ENCODE measurements at regions of chr17 and their contacts with region 1.

Region 1: DNA sequence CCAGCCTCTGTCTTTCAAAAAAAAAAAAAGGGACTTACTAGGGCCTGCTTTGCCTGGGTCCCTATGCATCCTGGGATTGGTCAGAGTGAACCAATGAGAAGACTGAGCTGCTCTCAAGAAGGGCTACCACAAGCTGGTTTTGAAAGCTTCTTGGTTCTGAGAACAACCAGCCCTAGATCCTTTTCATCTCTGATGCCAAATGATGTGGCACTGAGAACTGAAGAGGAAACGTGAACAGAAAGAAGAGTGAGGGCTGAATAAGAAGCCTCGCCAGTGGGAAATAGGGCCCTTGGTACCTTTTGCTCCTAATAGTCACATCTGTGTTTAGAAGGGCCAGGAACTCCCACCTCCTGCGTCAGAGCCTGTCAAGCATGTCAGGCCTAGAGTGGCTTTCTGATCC is 10.7 kb downstream of the TACO1 start:
- DNase-seq: no peak
- H3K4me3 ChIP-seq: no peak overlapping the region
- H3K4me3 Mint-ChIP-seq: peak overlapping the region in 5 of 7 donors; percentile 15 to 71 (median 54)
- H3K27ac ChIP-seq: no peak overlapping the region
- H3K27ac Mint-ChIP-seq: peak overlapping the region; percentile 45 to 93 (median 84)
- H3K4me1 ChIP-seq: peaks cover 30% of the 10 kb centered on the region
- H3K4me1 Mint-ChIP-seq: peaks cover 29 to 35% (median 34%) of the 10 kb centered on the region in 3 donors
- H3K27me3 ChIP-seq: no peaks in the 10 kb centered on the region
- H3K27me3 Mint-ChIP-seq: no peaks in the 10 kb centered on the region

Region 2: DNA sequence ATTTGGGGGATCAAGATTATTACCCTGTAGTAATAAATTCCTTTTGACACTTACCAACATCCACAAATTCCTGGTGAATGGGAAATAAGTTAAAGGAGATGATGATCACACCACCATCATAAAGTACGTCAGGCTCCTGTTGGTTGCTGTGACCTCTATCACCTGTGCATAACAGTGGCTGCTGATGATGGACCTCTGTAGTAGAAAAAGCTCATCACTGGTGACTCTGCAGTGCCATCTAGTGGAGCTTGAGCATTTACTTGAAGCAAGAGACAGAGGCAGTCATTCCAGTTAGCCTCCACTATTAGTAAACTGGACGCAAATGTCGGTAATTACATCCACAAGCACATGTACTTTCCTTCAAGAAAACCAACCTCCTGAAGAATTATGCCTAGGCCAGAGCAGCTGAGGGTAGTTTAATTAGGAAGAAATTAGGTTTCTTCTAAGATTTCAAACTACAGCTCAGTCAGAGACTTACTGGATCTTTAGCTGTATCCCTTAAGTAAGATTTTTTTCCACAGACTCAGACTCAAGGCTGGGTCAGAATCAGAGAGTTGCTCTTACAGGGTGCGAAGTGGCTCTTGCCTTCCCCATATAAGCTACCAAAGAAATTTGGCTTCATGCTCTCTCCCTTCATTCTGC is 204.5 kb before region 1 on chr17:
- CTCF ChIA-PET with region 1: interaction called, 10 read pairs
- POLR2A ChIA-PET with region 1: no interaction called
- DNase-seq: peak; percentile 33 to 74 (median 53)
- H3K4me3 ChIP-seq: no peak overlapping the region
- H3K4me3 Mint-ChIP-seq: no peak overlapping the region
- H3K27ac ChIP-seq: no peak overlapping the region
- H3K27ac Mint-ChIP-seq: peak overlapping the region in 4 of 8 donors; percentile 43 to 67 (median 48)
- H3K4me1 ChIP-seq: no peaks in the 10 kb centered on the region
- H3K4me1 Mint-ChIP-seq: peaks cover 2 to 8% (median 8%) of the 10 kb centered on the region in 3 donors
- H3K27me3 ChIP-seq: no peaks in the 10 kb centered on the region
- H3K27me3 Mint-ChIP-seq: no peaks in the 10 kb centered on the region

Region 3: DNA sequence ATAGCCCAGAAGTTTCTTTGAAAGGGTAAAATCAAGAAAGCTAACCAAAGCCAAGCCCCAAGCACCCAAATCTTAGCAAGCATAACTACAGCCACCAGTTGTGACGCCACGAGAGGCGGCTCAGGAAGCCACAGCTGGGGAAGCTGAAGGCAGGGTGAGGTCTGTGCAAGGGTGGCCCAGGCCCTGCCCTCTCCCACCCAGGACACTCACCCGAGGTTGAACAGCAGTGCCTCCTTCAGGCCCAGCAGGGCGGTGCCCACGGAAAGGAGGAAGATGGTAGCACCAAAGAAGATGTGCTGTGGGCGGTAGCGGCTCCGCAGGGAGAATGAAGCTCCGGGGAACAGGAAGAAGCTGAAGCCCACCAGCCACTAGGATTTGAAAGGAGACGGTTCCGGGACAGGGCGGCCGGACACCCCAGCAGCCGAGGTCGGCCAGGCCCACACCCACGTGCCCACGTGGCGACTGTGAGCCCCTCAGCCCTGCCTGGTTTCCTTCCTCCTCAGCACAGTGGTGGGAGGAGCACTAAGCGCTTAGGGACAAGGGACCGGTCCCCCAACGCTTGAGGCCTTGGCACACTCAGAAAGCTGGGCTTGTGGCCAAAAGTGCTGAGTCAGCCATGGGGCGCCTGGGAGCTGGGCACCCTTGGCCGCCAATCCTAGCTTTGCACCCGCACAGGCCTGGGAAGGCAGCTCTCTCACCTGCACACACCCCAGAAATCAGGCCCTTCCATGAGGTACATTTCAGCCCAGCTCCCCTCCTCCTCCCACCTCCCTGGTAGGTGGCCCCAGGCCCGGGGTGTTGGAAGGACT is 176.3 kb before region 1 on chr17:
- CTCF ChIA-PET with region 1: interaction called, 174 read pairs
- POLR2A ChIA-PET with region 1: no interaction called
- DNase-seq: peak; percentile 33 to 86 (median 58)
- H3K4me3 ChIP-seq: no peak overlapping the region
- H3K4me3 Mint-ChIP-seq: peak overlapping the region; percentile 38 to 81 (median 68)
- H3K27ac ChIP-seq: peak overlapping the region; percentile 38
- H3K27ac Mint-ChIP-seq: peak overlapping the region; percentile 81 to 98 (median 94)
- H3K4me1 ChIP-seq: peaks cover 43% of the 10 kb centered on the region
- H3K4me1 Mint-ChIP-seq: peaks cover 32 to 77% (median 39%) of the 10 kb centered on the region in 3 donors
- H3K27me3 ChIP-seq: no peaks in the 10 kb centered on the region
- H3K27me3 Mint-ChIP-seq: no peaks in the 10 kb centered on the region

Region 4: DNA sequence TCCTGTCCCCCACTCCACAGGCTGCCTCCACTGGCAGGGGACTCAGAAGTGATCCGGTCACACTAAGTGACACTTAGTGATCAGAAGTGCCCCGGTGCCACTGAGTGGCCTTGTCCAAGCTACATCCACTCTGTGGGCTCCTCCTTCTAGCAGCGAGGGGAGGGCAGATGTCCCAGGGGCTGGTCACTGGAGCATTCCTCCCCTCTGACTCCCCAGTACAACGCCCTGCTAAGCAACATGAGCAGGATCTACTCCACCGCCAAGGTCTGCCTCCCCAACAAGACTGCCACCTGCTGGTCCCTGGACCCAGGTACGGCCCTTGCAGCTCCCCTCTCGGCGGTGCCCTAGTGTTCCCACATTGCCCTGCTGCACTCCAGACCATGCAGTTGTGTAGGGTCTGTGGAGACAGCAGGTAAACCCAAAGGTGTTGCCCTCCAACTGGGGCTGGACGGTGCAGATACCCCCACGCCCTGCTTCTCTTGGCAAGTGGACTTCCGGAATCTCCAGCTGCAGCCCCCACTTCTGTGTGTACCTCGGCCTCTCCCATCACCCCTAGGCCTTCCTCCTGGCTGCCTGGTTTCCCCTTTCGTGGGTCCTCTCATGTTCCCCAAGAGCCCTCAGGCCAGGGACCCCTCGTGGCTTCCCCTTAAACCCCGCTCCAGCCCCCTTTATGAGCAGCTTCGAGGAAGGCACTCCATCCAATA is 132.4 kb before region 1 on chr17:
- CTCF ChIA-PET with region 1: interaction called, 47 read pairs
- POLR2A ChIA-PET with region 1: interaction called, 4 read pairs
- DNase-seq: peak; percentile 54 to 87 (median 70)
- H3K4me3 ChIP-seq: no peak overlapping the region
- H3K4me3 Mint-ChIP-seq: peak overlapping the region in 6 of 7 donors; percentile 67 to 87 (median 72)
- H3K27ac ChIP-seq: no peak overlapping the region
- H3K27ac Mint-ChIP-seq: peak overlapping the region in 2 of 8 donors; percentile 51 to 74
- H3K4me1 ChIP-seq: peaks cover 14% of the 10 kb centered on the region
- H3K4me1 Mint-ChIP-seq: peaks cover 14 to 31% (median 14%) of the 10 kb centered on the region in 3 donors
- H3K27me3 ChIP-seq: peaks cover 7% of the 10 kb centered on the region
- H3K27me3 Mint-ChIP-seq: peaks cover 7 to 9% of the 10 kb centered on the region in 2 donors

Region 5: DNA sequence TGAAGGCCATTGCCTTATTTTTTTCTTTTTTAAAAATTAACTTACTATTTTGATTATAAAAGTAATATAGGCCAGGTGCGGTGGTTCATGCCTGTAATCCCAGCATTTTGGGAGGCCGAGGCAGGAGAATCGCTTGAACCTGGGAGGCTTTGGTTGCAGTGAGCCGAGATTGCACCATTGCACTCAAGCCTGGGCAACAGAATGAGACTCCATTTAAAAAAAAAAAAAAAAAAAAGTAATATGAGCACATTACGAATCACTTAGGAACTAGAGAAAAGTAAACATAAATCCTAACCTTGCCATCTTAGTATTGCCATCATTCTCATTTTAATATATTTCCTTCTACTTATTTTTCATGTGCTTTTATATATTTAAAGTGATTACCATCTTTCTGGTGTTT is 23.6 kb before region 1 on chr17:
- CTCF ChIA-PET with region 1: interaction called, 9 read pairs
- POLR2A ChIA-PET with region 1: interaction called, 13 read pairs
- DNase-seq: no peak
- H3K4me3 ChIP-seq: no peak overlapping the region
- H3K4me3 Mint-ChIP-seq: no peak overlapping the region
- H3K27ac ChIP-seq: no peak overlapping the region
- H3K27ac Mint-ChIP-seq: no peak overlapping the region
- H3K4me1 ChIP-seq: peaks cover 12% of the 10 kb centered on the region
- H3K4me1 Mint-ChIP-seq: peaks cover 19 to 24% (median 20%) of the 10 kb centered on the region in 3 donors
- H3K27me3 ChIP-seq: no peaks in the 10 kb centered on the region
- H3K27me3 Mint-ChIP-seq: no peaks in the 10 kb centered on the region

Region 6: DNA sequence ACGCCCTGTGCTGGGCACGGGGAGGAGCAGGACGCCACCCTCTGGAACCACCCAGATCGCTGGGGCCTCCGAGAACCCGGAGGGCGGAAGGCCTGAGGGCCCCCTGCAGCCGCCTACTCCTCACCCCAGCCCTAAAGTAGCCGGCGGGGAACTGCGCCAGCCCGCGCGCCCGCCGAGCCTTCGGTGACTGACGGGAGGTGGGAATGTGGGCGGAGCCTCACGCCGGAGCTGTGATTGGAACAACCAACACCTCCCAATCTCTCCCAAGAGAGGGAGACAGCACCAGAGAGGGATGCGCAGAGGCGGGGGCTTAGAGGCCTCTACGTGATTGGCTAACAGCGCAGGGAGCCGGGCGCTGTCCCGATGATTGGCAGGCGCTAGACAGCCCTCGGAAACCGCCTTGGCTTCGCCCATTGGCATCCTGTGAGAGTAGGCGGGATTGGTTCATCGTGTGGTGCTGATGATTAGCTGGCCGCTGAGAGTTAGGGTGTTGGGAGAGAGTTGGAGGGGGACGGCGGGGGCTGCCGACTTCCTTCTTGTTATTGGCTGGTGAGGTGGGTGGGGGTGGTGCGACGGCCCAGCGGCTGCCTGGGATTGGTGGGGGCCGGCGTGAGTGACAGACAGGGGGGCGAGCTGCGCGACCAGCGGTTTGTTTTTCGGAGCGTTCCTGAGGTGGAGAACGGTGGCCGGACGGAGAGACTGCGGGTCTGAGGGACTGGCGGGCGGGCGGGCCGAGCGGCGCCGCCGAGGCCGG is 10.6 kb after region 1 on chr17 and contains the start of gene MAP3K3:
- CTCF ChIA-PET with region 1: interaction called, 26 read pairs
- POLR2A ChIA-PET with region 1: interaction called, 9 read pairs
- DNase-seq: peak; percentile 94 to 98 (median 97)
- H3K4me3 ChIP-seq: peak within 1 kb of the TSS; percentile 70
- H3K4me3 Mint-ChIP-seq: peak within 1 kb of the TSS; percentile 95 to 99 (median 98)
- H3K27ac ChIP-seq: peak within 1 kb of the TSS; percentile 55
- H3K27ac Mint-ChIP-seq: peak within 1 kb of the TSS; percentile 71 to 95 (median 91)
- H3K4me1 ChIP-seq: peaks cover 36% of the 10 kb centered on the region
- H3K4me1 Mint-ChIP-seq: peaks cover 44 to 47% (median 46%) of the 10 kb centered on the region in 3 donors
- H3K27me3 ChIP-seq: no peaks in the 10 kb centered on the region
- H3K27me3 Mint-ChIP-seq: peaks cover 0 to 1% of the 10 kb centered on the region in 2 donors
- total RNA-seq, gene MAP3K3: 34.7 to 35.8 TPM

Measured in CD8-positive, alpha-beta memory T cell (primary cell).